ENCODE measurements at regions of chr9 and their contacts with region 1.

Region 1: DNA sequence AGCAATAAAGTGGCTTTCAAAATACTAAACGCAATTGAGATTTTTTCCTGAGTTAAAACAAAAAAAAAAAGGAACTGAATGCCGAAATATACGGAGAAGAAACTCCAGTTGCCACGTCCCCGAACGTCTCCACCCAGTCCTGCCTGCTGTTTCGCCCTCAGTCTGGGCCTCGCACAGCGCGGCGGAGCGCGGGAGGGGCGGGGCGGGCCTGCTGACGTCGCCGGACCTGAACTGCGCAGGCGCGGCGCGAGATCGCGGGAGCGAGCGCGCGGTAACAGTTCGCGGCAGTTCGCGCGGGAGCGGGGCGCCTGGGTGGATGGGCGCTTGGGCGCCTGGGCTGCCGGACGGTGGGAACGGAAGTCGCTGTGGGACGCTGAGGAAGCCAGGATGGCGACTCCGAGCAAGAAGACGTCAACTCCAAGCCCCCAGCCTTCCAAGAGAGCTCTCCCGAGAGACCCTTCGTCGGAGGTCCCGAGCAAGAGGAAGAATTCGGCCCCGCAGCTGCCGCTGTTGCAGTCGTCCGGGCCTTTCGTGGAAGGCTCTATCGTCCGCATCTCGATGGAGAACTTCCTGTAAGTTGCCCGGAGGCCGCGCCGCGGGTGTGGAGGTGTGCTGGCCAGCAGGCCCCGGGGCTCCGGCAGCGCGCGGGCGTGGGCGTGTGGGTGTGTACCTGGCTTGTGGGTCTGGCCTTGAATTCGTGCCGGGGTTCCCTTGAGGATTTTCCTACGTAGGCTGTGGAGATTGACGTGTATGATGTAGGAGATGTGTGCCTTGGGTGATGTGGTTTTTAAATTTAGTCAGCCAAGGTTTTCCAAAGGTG is at the start of gene SMC5:
- DNase-seq: peak; percentile 90
- ATAC-seq: peak; percentile 82
- H3K4me3 Mint-ChIP-seq: peak within 1 kb of the TSS; percentile 93
- H3K27ac Mint-ChIP-seq: peak within 1 kb of the TSS; percentile 99
- H3K4me1 Mint-ChIP-seq: peaks cover 52% of the 10 kb centered on the region
- H3K27me3 Mint-ChIP-seq: no peaks in the 10 kb centered on the region
- CTCF ChIP-seq: no peak
- total RNA-seq, gene SMC5: 46.9 and 49.3 TPM in 2 replicates

Region 2: DNA sequence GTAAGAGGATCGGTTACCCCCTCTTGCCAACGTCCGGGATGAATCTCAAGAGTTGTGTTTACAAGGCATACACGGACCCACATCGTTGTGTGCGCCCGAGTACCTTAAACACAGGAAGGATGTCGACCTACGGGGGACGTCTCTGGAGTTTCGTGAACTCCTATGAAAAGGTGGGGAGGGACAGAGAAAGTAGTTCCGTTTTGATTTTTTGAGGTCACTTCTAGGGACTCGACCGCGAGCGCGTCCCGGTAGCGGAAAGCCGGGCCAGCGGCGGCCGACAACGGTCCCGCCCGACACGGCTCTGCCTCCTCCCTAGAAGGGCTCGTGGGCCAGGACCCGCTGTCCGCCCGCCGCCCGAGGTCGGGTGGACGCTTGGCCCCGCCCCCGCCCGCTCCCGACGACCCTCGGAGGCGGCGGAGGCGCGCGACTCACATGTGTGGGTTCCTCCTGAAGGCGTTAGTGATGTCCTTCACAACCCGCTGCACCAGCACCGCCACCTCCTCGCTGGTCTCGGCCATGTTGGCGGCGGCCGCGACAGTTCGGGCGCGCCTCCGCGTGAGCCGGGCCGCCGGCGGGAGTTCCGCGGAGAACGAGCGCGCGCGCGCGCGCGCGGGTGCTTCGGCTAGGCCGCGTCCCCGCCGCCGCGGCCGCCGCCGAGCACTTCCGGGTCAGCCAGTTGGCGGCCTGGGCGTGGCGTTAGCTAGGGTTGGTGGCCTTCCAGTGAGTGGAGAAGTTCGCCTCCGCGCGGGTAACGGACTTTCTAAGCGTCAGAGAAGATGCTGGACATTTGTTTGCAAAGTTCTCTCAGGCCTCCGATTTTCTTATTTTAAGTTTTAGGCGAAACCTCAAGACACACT is 499.3 kb before region 1 on chr9 and contains the start of gene PTAR1:
- CTCF ChIA-PET with region 1: no interaction called
- POLR2A ChIA-PET with region 1: interaction called, 5 read pairs
- intact Hi-C with region 1: loop called (anchors 1 kb)
- DNase-seq: peak; percentile 92
- ATAC-seq: peak; percentile 86
- H3K4me3 Mint-ChIP-seq: peak within 1 kb of the TSS; percentile 95
- H3K27ac Mint-ChIP-seq: peak within 1 kb of the TSS; percentile 94
- H3K4me1 Mint-ChIP-seq: peaks cover 25% of the 10 kb centered on the region
- H3K27me3 Mint-ChIP-seq: no peaks in the 10 kb centered on the region
- CTCF ChIP-seq: no peak
- total RNA-seq, gene PTAR1: 39.3 and 49.5 TPM in 2 replicates

Region 3: DNA sequence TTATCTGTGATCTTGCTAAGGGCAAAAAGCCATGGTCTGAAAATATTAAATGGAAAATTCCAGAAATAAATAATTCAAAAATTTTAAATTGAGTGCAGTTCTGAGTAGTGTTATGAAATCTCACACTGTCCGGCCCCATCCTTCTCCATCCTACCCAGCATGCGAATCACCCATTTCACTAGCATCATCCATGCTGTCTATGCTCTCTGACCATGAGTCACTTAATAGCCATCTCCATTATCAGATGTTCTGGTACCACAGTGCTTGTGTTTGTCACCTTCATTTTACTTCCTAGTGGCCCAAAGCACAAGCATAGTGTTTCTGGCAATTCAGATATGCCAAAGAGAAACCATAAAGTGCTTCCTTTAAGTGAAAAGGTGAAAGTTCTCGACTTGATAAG is 63.4 kb before region 1 on chr9:
- CTCF ChIA-PET with region 1: no interaction called
- POLR2A ChIA-PET with region 1: no interaction called
- intact Hi-C with region 1: no loop called
- DNase-seq: no peak
- ATAC-seq: no peak
- H3K4me3 Mint-ChIP-seq: no peak overlapping the region
- H3K27ac Mint-ChIP-seq: no peak overlapping the region
- H3K4me1 Mint-ChIP-seq: no peaks in the 10 kb centered on the region
- H3K27me3 Mint-ChIP-seq: peaks cover 5% of the 10 kb centered on the region
- CTCF ChIP-seq: no peak

Region 4: DNA sequence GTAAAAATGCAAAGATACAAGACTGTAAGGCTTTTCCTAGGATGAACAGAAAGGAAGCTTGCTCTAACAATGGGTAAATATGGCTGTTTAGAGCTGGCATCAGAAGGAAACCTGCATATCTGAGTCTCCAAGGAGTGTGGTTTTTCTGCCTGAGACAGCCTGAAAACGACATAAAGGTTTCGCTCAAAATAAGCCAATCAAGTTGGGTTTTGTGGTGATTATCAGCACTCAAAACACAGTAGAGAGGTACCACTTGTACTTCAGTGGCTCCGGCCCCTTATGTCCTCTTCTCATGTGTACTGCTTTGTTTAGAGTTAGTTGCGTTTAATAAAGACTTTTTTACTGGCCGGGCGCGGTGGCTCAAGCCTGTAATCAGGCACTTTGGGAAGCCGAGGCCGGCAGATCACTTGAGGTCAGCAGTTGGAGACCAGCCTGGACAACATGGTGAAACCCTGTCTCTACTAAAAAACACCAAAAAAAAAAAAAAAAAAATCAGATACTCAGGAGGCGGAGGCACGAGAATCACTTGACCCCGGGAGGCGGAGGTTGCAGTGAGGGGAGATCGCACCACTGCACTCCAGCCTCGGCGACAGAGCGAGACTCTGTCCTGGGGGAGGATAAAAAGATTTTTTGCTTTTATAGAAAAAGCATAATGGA is 116.2 kb after region 1 on chr9:
- CTCF ChIA-PET with region 1: no interaction called
- POLR2A ChIA-PET with region 1: no interaction called
- intact Hi-C with region 1: no loop called
- DNase-seq: no peak
- ATAC-seq: no peak
- H3K4me3 Mint-ChIP-seq: no peak overlapping the region
- H3K27ac Mint-ChIP-seq: no peak overlapping the region
- H3K4me1 Mint-ChIP-seq: no peaks in the 10 kb centered on the region
- H3K27me3 Mint-ChIP-seq: no peaks in the 10 kb centered on the region
- CTCF ChIP-seq: no peak

Region 5: GRCh38 chr9:70563431-70564204 is 304.7 kb after region 1 on chr9:
- CTCF ChIA-PET with region 1: no interaction called
- POLR2A ChIA-PET with region 1: no interaction called
- intact Hi-C with region 1: loop called (anchors 2 kb)
- DNase-seq: peak; percentile 20
- ATAC-seq: peak; percentile 93
- H3K4me3 Mint-ChIP-seq: peak overlapping the region; percentile 72
- H3K27ac Mint-ChIP-seq: peak overlapping the region; percentile 95
- H3K4me1 Mint-ChIP-seq: peaks cover 27% of the 10 kb centered on the region
- H3K27me3 Mint-ChIP-seq: no peaks in the 10 kb centered on the region
- CTCF ChIP-seq: no peak

Region 6: DNA sequence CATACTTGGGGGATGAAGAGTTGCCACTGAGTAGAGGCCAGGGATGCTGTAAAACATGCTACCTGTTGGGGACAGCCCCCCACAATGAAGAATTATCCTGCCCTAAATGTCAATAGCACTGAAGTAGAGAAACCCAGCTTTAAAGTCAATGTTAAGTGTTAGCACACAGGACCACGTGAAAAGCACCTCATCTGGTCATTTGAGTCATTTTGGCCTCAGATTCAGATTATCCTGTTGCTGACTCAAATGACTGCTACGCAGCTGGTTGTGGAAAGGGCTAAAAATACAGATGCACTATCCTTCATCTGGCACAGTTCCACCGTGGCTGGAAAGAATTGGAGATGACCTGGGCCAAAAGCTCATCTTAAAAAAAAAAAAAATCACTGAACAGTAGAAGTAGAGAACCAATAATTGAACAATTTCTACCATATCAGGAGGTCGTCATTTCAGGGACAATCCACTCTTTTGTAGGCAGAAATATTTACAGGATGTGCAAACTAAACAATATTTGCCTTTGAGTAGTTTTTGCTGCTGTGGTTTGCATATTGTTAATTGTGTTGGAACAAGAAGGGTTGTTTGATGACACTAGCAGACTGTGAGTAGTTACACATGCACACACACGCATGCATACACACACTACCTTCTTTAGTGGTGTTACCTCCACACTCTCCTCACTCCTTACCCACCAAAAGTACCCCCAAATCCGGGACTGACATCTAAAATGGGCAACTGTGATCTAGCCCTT is 350.8 kb after region 1 on chr9:
- CTCF ChIA-PET with region 1: no interaction called
- POLR2A ChIA-PET with region 1: no interaction called
- intact Hi-C with region 1: loop called (anchors 5 kb)
- DNase-seq: no peak
- ATAC-seq: no peak
- H3K4me3 Mint-ChIP-seq: no peak overlapping the region
- H3K27ac Mint-ChIP-seq: no peak overlapping the region
- H3K4me1 Mint-ChIP-seq: peaks cover 16% of the 10 kb centered on the region
- H3K27me3 Mint-ChIP-seq: no peaks in the 10 kb centered on the region
- CTCF ChIP-seq: no peak